ENCODE measurements at regions of chrX and their contacts with region 1.

Region 1: DNA sequence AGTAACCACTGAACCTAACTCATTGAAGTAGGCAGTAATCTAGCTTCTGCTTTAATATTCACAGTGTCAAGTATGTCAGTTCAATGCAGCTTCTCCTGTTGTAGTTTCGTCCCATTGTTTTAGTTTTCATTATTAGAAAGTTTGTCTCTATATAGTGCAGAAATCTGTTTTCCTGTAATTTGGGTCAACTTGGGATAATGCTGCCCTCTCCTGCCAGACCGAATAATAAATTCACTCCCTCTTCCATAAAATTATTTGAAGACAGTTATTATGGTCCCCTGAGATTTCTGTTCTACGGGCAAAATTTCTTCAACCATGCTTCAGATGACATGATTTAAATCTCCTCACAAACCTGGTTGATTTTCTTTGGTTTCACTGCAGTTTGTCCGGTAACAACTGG is 4.6 kb upstream of the LUZP4 start:
- DNase-seq: no peak
- H3K4me3 ChIP-seq: no peak overlapping the region
- H3K27ac ChIP-seq: no peak overlapping the region
- H3K27me3 ChIP-seq: no peaks in the 10 kb centered on the region
- CTCF ChIP-seq: 0 out of 2 replicates have a peak, but pooled peaks have one; percentile 18

Region 2: DNA sequence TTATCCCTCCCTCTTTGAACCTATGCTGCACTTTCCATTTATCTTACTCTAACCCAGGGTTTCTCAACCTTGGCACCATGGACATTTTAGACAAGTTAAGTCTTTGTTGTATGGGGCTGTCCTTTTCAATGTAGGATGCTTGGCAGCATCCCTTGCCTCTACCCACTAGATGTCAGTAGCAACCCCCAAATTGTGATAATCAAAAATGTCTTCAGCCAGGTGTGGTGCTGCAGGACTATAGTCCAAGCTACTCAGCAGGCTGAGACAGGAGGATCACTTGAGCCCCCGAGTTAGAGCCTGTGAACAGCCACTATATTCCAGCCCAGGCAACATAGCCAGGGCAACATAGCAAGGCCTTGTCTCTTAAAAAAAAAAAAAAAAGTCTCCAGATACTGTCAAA is 57.9 kb before region 1 on chrX:
- CTCF ChIA-PET with region 1: interaction called, 16 read pairs
- POLR2A ChIA-PET with region 1: no interaction called
- DNase-seq: no peak
- H3K4me3 ChIP-seq: no peak overlapping the region
- H3K27ac ChIP-seq: no peak overlapping the region
- H3K27me3 ChIP-seq: no peaks in the 10 kb centered on the region
- CTCF ChIP-seq: peak; percentile 53

Region 3: GRCh38 chrX:115259238-115259875 is 25.5 kb before region 1 on chrX:
- CTCF ChIA-PET with region 1: no interaction called
- POLR2A ChIA-PET with region 1: no interaction called
- DNase-seq: no peak
- H3K4me3 ChIP-seq: no peak overlapping the region
- H3K27ac ChIP-seq: no peak overlapping the region
- H3K27me3 ChIP-seq: no peaks in the 10 kb centered on the region
- CTCF ChIP-seq: no peak